ENCODE measurements at regions of chr7 and their contacts with region 1.

Region 1: DNA sequence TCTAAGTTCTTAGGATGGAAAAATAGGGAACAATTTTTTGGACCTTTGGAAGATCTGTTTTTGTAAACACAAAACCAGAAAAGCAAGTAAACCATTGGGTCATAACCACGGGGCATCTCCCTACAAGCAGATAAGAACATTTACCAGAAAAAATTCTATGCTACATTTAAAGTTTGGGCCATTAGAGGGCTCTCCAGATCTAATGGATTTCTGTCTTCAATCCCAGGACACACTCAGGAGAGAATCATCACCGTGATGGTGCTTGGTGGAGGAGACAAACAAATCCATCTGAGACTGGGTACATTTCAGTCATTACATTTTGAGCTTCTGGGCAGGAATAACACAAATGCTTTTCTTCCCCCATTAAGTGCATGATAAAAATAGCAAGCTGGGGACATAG is 178.4 kb upstream of the TARP start:
- DNase-seq: no peak
- ATAC-seq: peak; percentile 46
- H3K4me3 Mint-ChIP-seq: no peak overlapping the region
- H3K27ac Mint-ChIP-seq: no peak overlapping the region
- H3K4me1 Mint-ChIP-seq: no peaks in the 10 kb centered on the region
- H3K27me3 Mint-ChIP-seq: peaks cover 4% of the 10 kb centered on the region

Region 2: GRCh38 chr7:38424750-38425463 is 26.9 kb before region 1 on chr7:
- CTCF ChIA-PET with region 1: no interaction called
- POLR2A ChIA-PET with region 1: no interaction called
- intact Hi-C with region 1: loop called in 1 of 2 experiments (anchors 1 kb)
- DNase-seq: no peak
- ATAC-seq: peak; percentile 60
- H3K4me3 Mint-ChIP-seq: no peak overlapping the region
- H3K27ac Mint-ChIP-seq: peak overlapping the region; percentile 26
- H3K4me1 Mint-ChIP-seq: peaks cover 41% of the 10 kb centered on the region
- H3K27me3 Mint-ChIP-seq: no peaks in the 10 kb centered on the region

Region 3: DNA sequence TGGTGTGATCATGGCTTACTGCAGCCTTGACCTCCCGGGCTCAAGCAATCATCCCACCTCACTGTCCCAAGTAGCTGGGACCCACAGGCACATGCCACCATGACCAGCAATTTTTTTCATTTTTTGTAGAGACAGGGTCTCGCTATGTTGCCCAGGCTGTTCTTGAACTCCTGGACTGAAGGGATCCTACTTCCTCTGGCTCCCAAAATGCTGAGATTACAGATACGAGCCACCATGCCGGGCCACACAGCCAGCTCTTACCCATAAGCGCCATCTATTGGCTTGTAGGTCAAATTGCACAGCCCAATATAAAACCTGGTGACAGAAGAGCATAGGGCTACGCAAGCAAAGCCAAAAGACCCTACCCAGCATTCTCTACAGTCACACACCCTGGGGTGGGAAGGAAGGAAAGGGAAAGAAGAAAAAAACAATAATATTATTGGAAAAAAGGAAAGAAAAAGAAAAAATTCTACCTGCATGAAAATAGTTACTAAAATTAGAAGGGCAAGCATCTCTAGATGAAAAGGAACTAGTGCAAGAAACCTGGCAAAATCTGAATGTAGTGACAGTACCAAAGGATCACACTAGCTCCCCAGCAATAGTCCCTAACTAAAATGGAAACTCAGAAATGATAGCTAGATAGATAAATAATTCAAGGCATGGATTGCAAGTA is 208.7 kb after region 1 on chr7:
- CTCF ChIA-PET with region 1: interaction called, 4 read pairs
- POLR2A ChIA-PET with region 1: no interaction called
- intact Hi-C with region 1: loop called (anchors 1 to 5 kb)
- DNase-seq: peak; percentile 56
- ATAC-seq: peak; percentile 82
- H3K4me3 Mint-ChIP-seq: no peak overlapping the region
- H3K27ac Mint-ChIP-seq: no peak overlapping the region
- H3K4me1 Mint-ChIP-seq: no peaks in the 10 kb centered on the region
- H3K27me3 Mint-ChIP-seq: peaks cover 19% of the 10 kb centered on the region

Measured in activated CD4-positive, alpha-beta T cell treated with anti-CD3 and anti-CD28 coated beads for 36 hours (primary cell).